ENCODE measurements at regions of chr20 and their contacts with region 1.

Region 1: GRCh38 chr20:23350196-23350903 is at the start of gene NXT1:
- DNase-seq: peak; percentile 98
- H3K4me3 ChIP-seq: peak within 1 kb of the TSS; percentile 20 to 79 (median 77)
- H3K27ac ChIP-seq: peak within 1 kb of the TSS; percentile 94
- H3K4me1 ChIP-seq: peaks cover 19% of the 10 kb centered on the region
- H3K27me3 ChIP-seq: no peaks in the 10 kb centered on the region
- CTCF ChIP-seq: no peak
- POLR2A ChIP-seq: peak; percentile 19
- total RNA-seq, gene NXT1: 27.1 and 28.5 TPM in 2 replicates

Region 2: DNA sequence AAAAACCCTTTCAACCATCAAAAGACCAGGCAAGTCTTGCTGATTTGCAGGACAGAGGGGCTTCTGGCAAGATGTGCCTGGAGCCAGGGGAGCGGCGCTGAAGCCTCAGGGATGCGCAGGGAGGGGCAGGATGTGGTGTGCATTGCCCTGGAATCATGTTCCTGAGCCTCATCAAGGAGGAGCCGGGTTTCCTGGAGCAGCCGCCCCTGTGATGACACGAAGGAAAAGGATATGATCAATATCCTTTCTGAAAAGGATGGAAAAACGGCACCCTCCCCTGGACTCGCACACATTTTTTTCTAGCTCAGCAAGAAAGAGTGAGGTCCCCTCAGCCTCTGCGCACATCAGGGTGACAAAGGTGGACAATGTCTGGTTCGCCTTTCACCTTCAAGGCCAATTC is 488.4 kb before region 1 on chr20:
- CTCF ChIA-PET with region 1: no interaction called
- POLR2A ChIA-PET with region 1: no interaction called
- dilution Hi-C with region 1: no loop called
- intact Hi-C with region 1: loop called (anchors 2 kb)
- DNase-seq: peak; percentile 74
- H3K4me3 ChIP-seq: no peak overlapping the region
- H3K27ac ChIP-seq: peak overlapping the region; percentile 78
- H3K4me1 ChIP-seq: peaks cover 33% of the 10 kb centered on the region
- H3K27me3 ChIP-seq: no peaks in the 10 kb centered on the region
- CTCF ChIP-seq: no peak
- POLR2A ChIP-seq: peak; percentile 47

Region 3: DNA sequence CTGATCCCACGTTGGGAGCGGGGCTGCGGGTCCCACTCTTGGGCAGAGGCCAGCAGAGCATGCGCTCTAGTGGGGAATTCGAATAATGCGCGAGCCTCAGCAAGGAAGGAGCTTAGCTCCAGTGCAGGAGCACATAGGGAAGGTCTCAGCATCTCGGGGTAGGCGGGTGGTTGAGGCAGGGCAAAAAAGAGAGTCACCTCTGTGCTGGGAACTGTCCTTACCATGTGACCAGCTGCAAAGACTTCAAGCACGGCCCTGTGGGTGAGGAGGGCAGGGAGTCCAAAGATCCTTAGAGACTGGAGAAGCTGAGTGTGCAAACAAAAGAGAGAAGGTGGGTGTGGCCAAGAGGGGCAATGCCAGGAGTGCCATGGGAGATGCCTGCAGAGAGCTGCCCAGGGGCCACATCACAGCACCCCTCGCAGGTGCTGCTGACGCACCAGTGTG is 185.0 kb before region 1 on chr20:
- CTCF ChIA-PET with region 1: no interaction called
- POLR2A ChIA-PET with region 1: no interaction called
- dilution Hi-C with region 1: no loop called
- intact Hi-C with region 1: no loop called
- DNase-seq: no peak
- H3K4me3 ChIP-seq: no peak overlapping the region
- H3K27ac ChIP-seq: no peak overlapping the region
- H3K4me1 ChIP-seq: peaks cover 18% of the 10 kb centered on the region
- H3K27me3 ChIP-seq: no peaks in the 10 kb centered on the region
- CTCF ChIP-seq: peak in 1 of 2 donors; percentile 14
- POLR2A ChIP-seq: no peak

Region 4: DNA sequence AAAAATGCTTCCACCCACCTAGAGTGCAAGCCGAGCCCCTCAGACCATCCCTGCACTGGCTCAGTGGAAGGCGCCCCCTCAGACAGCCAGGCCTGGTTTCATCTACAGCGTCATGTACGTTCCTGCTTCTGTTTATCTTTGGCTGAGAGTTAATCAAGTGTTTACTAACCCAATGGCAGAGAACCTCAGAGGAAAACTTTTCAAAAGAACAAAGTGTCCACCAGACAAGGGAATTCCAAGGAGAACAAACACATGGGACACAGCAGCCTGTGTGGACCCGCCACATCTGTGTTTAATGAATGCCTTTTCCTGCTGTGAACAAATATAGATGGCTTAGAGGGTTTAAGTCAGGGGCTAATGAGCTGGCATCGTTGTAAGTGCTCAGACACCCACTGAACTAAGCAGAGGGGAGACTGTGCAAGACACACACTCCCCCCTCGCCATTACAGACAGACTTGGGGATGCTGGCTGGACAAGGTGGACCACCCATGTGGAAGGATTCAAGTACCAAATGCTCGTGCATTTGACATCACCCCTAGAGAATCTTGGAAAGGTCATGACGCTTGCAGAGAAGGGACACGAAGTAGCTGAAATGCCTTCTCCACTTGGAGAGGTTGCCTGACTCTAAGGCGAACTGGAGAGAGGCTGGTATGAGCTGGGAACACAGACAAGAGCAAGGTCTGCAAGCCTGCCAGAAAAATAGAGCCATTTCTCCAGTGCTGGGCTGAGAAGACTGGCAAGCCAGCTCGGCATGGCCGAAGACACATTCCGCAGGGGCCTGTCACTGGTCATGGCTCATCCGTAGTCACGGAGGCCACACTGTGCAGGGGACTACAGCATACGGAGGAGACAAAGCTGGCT is 53.3 kb before region 1 on chr20:
- CTCF ChIA-PET with region 1: no interaction called
- POLR2A ChIA-PET with region 1: no interaction called
- dilution Hi-C with region 1: no loop called
- intact Hi-C with region 1: no loop called
- DNase-seq: no peak
- H3K4me3 ChIP-seq: no peak overlapping the region
- H3K27ac ChIP-seq: no peak overlapping the region
- H3K4me1 ChIP-seq: no peaks in the 10 kb centered on the region
- H3K27me3 ChIP-seq: peaks cover 0 to 1% of the 10 kb centered on the region in 2 experiments
- CTCF ChIP-seq: no peak
- POLR2A ChIP-seq: no peak

Region 5: GRCh38 chr20:23374441-23374840 is 24.1 kb after region 1 on chr20:
- CTCF ChIA-PET with region 1: interaction called, 10 read pairs
- POLR2A ChIA-PET with region 1: no interaction called
- dilution Hi-C with region 1: no loop called
- intact Hi-C with region 1: no loop called
- DNase-seq: peak; percentile 76
- H3K4me3 ChIP-seq: no peak overlapping the region
- H3K27ac ChIP-seq: peak overlapping the region; percentile 23
- H3K4me1 ChIP-seq: peaks cover 13% of the 10 kb centered on the region
- H3K27me3 ChIP-seq: no peaks in the 10 kb centered on the region
- CTCF ChIP-seq: no peak
- POLR2A ChIP-seq: no peak

Region 6: DNA sequence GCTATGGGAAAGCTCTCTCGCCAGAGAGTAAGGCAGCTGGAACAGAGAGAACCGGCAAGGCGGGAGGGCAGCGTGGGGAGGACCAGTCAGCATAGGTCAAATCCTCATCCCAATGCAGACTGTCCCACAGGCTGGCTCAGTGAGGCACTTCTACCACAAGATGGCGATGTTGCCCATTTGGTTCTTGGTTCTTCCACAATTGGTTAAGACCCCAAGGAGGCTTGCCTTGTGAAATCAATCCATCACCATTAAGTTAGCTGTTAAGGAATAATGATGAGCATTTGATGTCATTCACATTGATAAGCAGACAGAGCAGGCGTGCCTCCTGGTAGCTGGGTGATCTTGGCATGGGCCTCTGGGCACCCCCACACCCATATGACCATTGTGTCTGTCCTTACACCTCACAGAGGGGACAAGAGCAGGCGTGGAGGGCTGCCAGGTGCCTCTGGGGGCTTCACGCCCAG is 91.5 kb after region 1 on chr20:
- CTCF ChIA-PET with region 1: interaction called, 60 read pairs
- POLR2A ChIA-PET with region 1: no interaction called
- dilution Hi-C with region 1: no loop called
- intact Hi-C with region 1: loop called (anchors 1 kb)
- DNase-seq: peak; percentile 77
- H3K4me3 ChIP-seq: no peak overlapping the region
- H3K27ac ChIP-seq: no peak overlapping the region
- H3K4me1 ChIP-seq: no peaks in the 10 kb centered on the region
- H3K27me3 ChIP-seq: no peaks in the 10 kb centered on the region
- CTCF ChIP-seq: peak; percentile 80 to 90
- POLR2A ChIP-seq: no peak

Region 7: DNA sequence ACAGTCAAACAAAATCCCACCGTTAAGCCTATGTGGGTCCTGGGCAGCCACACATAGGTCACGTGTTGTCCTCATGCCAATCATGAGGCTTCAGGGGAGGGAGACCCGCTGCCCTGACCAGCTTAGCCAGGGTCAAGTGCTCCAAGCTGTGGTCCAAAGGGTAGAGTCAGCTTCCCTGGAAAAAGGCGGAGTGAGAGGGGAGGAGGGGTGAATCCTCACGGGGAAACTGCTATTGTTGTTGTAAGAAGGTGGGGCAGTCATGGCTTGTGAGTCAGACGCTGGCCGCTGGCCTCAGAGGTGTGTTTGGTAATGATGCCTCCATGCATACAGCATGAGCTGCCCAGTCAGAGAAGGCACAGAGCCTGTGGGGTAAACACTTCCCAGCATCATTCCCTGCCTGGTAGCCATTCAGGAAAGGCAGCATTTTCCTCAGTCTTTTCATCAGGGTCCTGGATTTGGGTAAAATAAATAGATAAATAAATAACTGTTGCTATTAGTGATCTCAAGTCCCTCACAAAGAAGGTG is 278.7 kb after region 1 on chr20:
- CTCF ChIA-PET with region 1: no interaction called
- POLR2A ChIA-PET with region 1: no interaction called
- dilution Hi-C with region 1: no loop called
- intact Hi-C with region 1: loop called (anchors 5 kb)
- DNase-seq: peak; percentile 86
- H3K4me3 ChIP-seq: no peak overlapping the region
- H3K27ac ChIP-seq: peak overlapping the region; percentile 45
- H3K4me1 ChIP-seq: peaks cover 21% of the 10 kb centered on the region
- H3K27me3 ChIP-seq: no peaks in the 10 kb centered on the region
- CTCF ChIP-seq: no peak
- POLR2A ChIP-seq: no peak

Measured in endothelial cell of umbilical vein (primary cell).